Left cardiac atrium (tissue), 4 donors: ENCODE measurements at regions of chr11 and their contacts with region 1.

Region 1: GRCh38 chr11:35893796-35894475 is 49.9 kb upstream of the LDLRAD3 start:
- DNase-seq: no peak
- ATAC-seq: peak in 1 of 2 donors; percentile 17

Region 2: GRCh38 chr11:35822815-35823495 is 71.0 kb before region 1 on chr11:
- intact Hi-C with region 1: no loop called
- DNase-seq: no peak
- ATAC-seq: no peak

Region 3: GRCh38 chr11:35838071-35838470 is 55.9 kb before region 1 on chr11:
- intact Hi-C with region 1: loop called in 1 of 2 experiments (anchors 10 kb)
- DNase-seq: no peak
- ATAC-seq: no peak

Region 4: DNA sequence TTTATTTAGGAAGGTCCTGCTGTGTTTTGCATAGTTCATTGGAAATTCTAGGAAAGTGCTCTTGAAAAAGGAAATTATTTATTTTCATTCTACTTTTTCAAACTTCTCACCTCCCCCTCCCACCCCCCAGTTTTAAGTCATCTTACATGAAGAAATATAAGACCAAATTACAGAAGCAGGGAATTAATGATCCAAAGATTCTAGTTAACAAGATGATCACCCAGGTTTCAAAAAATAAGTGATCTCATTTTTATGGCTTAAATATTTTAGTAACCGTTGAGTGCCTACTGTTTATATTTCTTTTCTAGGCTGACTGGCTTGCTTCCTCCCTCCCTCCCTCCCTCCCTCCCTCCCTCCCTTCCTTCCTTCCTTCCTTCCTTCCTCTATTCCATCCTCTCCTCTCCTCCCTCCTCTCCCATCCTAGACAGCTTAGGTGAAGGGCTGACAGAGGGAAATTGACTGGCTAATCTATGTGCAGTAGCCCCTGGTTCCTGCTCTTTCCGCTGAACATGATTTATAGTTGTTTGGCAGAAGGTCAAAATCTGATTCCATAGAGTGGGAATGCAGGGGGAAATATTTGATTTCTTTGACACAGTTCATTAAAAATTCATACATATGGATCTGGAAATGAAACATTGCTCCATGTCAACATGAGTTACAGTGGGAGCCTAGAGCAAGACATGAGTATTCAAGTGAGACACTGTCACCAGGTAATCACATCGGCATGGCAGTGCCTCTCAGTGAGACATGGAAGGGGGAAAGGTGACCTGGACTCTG is 271.9 kb after region 1 on chr11:
- intact Hi-C with region 1: no loop called
- DNase-seq: no peak
- ATAC-seq: no peak